GM12878 (cell line): ENCODE measurements at regions of chr6 and their contacts with region 1.

Region 1: DNA sequence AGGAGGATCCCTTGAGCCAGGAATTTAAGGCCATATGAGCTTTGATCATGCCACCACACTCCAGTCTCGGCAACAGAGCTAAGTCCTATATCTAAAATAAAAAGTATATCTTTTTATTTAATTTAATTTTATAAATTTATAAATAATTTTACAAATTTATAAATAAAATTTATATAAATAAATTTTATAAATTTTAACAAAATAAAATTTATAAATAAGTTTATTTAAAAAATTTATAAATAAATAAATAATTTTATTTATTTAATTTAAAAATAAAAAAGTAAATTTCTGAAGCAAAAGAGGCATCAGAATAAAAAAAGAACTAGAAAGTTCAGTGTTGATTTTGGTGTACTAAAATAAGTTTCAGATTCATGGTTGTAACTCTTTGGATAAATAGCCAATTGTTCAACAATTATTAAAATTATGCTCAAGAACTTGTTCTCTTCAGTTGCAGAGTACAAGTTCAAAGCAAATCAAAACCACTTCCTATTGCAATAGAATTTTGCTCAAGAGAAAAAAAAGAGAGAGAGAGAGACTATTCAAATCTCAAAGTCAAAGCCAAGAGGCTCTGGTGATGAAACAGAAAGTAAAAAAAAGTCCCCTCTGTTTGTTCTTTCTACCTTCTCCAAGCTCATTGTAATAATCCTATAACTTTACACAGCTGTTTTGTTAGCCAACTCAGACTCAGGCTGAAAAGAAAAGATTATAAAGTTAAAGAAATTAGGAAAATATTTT is 547.5 kb upstream of the ADGRB3 start:
- DNase-seq: peak; percentile 32
- ATAC-seq: peak; percentile 93
- H3K4me3 ChIP-seq: no peak overlapping the region
- H3K27ac ChIP-seq: peak overlapping the region; percentile 47
- H3K4me1 ChIP-seq: peaks cover 3% of the 10 kb centered on the region; the same call in 1 of the 2 replicates
- H3K27me3 ChIP-seq: no peaks in the 10 kb centered on the region
- CTCF ChIP-seq: no peak
- EP300 ChIP-seq: peak in 1 of 2 experiments; percentile 23; a peak in 1 of 4 replicates
- POLR2A ChIP-seq: no peak
- RAD21 ChIP-seq: no peak

Region 2: DNA sequence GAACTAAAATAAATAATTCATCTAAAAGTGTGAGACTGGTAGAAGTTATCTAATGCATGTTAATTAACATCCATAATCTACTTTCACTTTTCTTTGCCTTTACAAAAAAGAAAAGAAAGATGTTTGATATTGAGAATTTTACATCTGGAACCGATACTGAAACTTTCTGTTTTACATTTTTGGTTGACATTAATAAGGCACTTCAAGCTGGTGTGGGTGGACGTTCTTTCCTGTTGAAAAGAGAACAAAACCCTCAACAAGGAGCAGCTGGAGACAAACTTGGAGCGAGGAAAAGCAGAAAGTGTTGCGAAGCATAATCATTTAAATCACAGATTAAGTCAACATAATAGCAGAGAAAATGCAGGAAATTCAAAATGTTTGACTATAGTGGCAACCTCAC is 27.7 kb before region 1 on chr6:
- CTCF ChIA-PET with region 1: interaction called, 3 read pairs
- POLR2A ChIA-PET with region 1: interaction called, 3 read pairs
- RAD21 ChIA-PET with region 1: interaction called, 18 read pairs
- SMC1A ChIA-PET with region 1: interaction called, 7 read pairs
- in situ Hi-C with region 1: no loop called
- intact Hi-C with region 1: no loop called
- DNase-seq: peak; percentile 15
- ATAC-seq: peak; percentile 87
- H3K4me3 ChIP-seq: no peak overlapping the region; the same call in 1 of the 2 replicates
- H3K27ac ChIP-seq: no peak overlapping the region; the same call in 1 of the 2 replicates
- H3K4me1 ChIP-seq: peaks cover 3% of the 10 kb centered on the region; the same call in 1 of the 2 replicates
- H3K27me3 ChIP-seq: no peaks in the 10 kb centered on the region
- CTCF ChIP-seq: no peak
- EP300 ChIP-seq: peak in 1 of 2 experiments; percentile 14; a peak in 1 of 4 replicates
- POLR2A ChIP-seq: no peak
- RAD21 ChIP-seq: no peak

Region 3: GRCh38 chr6:68126089-68126749 is 38.7 kb after region 1 on chr6:
- CTCF ChIA-PET with region 1: no interaction called
- POLR2A ChIA-PET with region 1: no interaction called
- RAD21 ChIA-PET with region 1: interaction called, 13 read pairs
- SMC1A ChIA-PET with region 1: interaction called, 9 read pairs
- in situ Hi-C with region 1: no loop called
- intact Hi-C with region 1: no loop called
- DNase-seq: peak; percentile 26
- ATAC-seq: peak; percentile 98
- H3K4me3 ChIP-seq: no peak overlapping the region
- H3K27ac ChIP-seq: no peak overlapping the region
- H3K4me1 ChIP-seq: no peaks in the 10 kb centered on the region
- H3K27me3 ChIP-seq: no peaks in the 10 kb centered on the region
- CTCF ChIP-seq: no peak
- EP300 ChIP-seq: no peak; a peak in 1 of 4 replicates
- POLR2A ChIP-seq: no peak
- RAD21 ChIP-seq: no peak

Region 4: DNA sequence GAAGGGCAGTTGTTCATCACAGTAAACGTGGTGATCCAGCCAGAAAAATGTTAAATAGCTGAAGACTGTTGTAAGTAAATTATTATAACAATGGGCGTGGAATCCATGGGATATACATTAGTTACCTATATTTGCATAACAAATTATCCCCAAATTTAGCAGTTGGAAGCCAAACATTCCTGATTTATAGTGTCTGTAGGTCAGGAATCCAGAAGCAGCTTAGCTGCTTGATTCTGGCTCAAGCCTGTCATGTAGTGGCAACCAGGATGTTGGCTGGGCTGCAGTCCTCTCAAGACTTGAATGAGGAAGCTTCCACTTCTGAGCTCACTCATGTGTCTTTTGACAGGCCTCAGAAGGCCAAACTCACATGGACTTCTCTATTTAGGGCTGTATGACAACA is 540.6 kb after region 1 on chr6:
- CTCF ChIA-PET with region 1: no interaction called
- POLR2A ChIA-PET with region 1: no interaction called
- RAD21 ChIA-PET with region 1: no interaction called
- SMC1A ChIA-PET with region 1: no interaction called
- in situ Hi-C with region 1: no loop called
- intact Hi-C with region 1: no loop called
- DNase-seq: no peak
- ATAC-seq: no peak
- H3K4me3 ChIP-seq: no peak overlapping the region
- H3K27ac ChIP-seq: no peak overlapping the region
- H3K4me1 ChIP-seq: no peaks in the 10 kb centered on the region
- H3K27me3 ChIP-seq: no peaks in the 10 kb centered on the region
- CTCF ChIP-seq: no peak
- EP300 ChIP-seq: no peak
- POLR2A ChIP-seq: no peak
- RAD21 ChIP-seq: no peak